CD4-positive, alpha-beta T cell (primary cell): ENCODE measurements at regions of chr9 and their contacts with region 1.

Region 1: GRCh38 chr9:31137176-31138160 is 1247.0 kb upstream of the ACO1 start:
- DNase-seq: no peak
- ATAC-seq: no peak
- H3K4me3 ChIP-seq: no peak overlapping the region
- H3K4me3 Mint-ChIP-seq: no peak overlapping the region
- H3K27ac ChIP-seq: no peak overlapping the region
- H3K27ac Mint-ChIP-seq: no peak overlapping the region
- H3K4me1 ChIP-seq: no peaks in the 10 kb centered on the region
- H3K4me1 Mint-ChIP-seq: peaks cover 6% of the 10 kb centered on the region
- H3K27me3 ChIP-seq: no peaks in the 10 kb centered on the region
- H3K27me3 Mint-ChIP-seq: no peaks in the 10 kb centered on the region
- CTCF ChIP-seq: no peak

Region 2: GRCh38 chr9:30982301-30982700 is 155.2 kb before region 1 on chr9:
- CTCF ChIA-PET with region 1: no interaction called
- POLR2A ChIA-PET with region 1: no interaction called
- intact Hi-C with region 1: no loop called
- DNase-seq: no peak
- ATAC-seq: no peak
- H3K4me3 ChIP-seq: no peak overlapping the region
- H3K4me3 Mint-ChIP-seq: no peak overlapping the region
- H3K27ac ChIP-seq: no peak overlapping the region
- H3K27ac Mint-ChIP-seq: no peak overlapping the region
- H3K4me1 ChIP-seq: no peaks in the 10 kb centered on the region
- H3K4me1 Mint-ChIP-seq: no peaks in the 10 kb centered on the region
- H3K27me3 ChIP-seq: no peaks in the 10 kb centered on the region
- H3K27me3 Mint-ChIP-seq: no peaks in the 10 kb centered on the region
- CTCF ChIP-seq: no peak

Region 3: DNA sequence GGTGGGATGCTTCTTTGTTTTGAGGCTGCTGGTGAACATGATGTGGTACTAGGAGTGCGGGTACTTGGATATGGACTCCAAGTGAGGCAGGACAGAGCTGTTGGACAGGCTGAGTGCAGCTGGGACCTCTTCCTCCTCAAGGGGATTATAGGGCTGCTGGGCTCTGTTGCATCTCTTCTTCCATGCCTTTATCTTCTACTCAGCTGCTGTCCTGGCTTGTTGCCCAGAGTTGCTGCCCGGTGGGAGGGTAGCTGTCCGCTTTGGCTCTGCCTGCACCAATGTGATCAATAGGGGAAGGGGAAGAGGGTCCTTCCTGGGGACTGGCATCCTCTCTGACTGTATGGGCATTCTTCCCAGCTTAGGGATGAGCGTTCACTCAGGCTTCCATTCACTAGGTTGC is 29.0 kb after region 1 on chr9:
- CTCF ChIA-PET with region 1: no interaction called
- POLR2A ChIA-PET with region 1: no interaction called
- intact Hi-C with region 1: no loop called
- DNase-seq: no peak
- ATAC-seq: no peak
- H3K4me3 ChIP-seq: no peak overlapping the region
- H3K4me3 Mint-ChIP-seq: no peak overlapping the region
- H3K27ac ChIP-seq: no peak overlapping the region
- H3K27ac Mint-ChIP-seq: no peak overlapping the region
- H3K4me1 ChIP-seq: no peaks in the 10 kb centered on the region
- H3K4me1 Mint-ChIP-seq: peaks cover 6% of the 10 kb centered on the region
- H3K27me3 ChIP-seq: no peaks in the 10 kb centered on the region
- H3K27me3 Mint-ChIP-seq: no peaks in the 10 kb centered on the region
- CTCF ChIP-seq: no peak

Region 4: DNA sequence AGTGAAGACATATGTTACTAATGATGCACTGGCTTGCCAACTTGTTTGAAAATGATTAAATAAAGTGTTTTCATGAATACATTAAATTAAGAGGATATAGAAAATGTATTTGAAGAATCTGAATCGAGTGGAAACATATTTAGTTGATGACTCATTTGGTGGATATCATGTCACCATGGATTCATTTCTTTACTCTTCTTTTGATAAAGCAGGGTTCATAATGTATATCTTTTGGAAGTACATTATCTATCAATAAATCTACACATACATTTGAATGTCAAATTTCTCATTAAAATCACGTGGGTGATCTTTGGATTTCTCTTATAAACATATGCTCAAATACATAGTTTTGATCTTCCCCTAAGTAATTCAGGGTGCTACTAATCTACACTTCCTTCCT is 98.9 kb after region 1 on chr9:
- CTCF ChIA-PET with region 1: no interaction called
- POLR2A ChIA-PET with region 1: no interaction called
- intact Hi-C with region 1: no loop called
- DNase-seq: no peak
- ATAC-seq: no peak
- H3K4me3 ChIP-seq: no peak overlapping the region
- H3K4me3 Mint-ChIP-seq: no peak overlapping the region
- H3K27ac ChIP-seq: no peak overlapping the region
- H3K27ac Mint-ChIP-seq: no peak overlapping the region
- H3K4me1 ChIP-seq: no peaks in the 10 kb centered on the region
- H3K4me1 Mint-ChIP-seq: peaks cover 22% of the 10 kb centered on the region
- H3K27me3 ChIP-seq: no peaks in the 10 kb centered on the region
- H3K27me3 Mint-ChIP-seq: no peaks in the 10 kb centered on the region
- CTCF ChIP-seq: no peak

Region 5: GRCh38 chr9:31574006-31574765 is 436.7 kb after region 1 on chr9:
- CTCF ChIA-PET with region 1: no interaction called
- POLR2A ChIA-PET with region 1: no interaction called
- intact Hi-C with region 1: loop called in 1 of 2 experiments (anchors 10 kb)
- DNase-seq: no peak
- ATAC-seq: no peak
- H3K4me3 ChIP-seq: no peak overlapping the region
- H3K4me3 Mint-ChIP-seq: no peak overlapping the region
- H3K27ac ChIP-seq: no peak overlapping the region
- H3K27ac Mint-ChIP-seq: no peak overlapping the region
- H3K4me1 ChIP-seq: no peaks in the 10 kb centered on the region
- H3K4me1 Mint-ChIP-seq: no peaks in the 10 kb centered on the region
- H3K27me3 ChIP-seq: no peaks in the 10 kb centered on the region
- H3K27me3 Mint-ChIP-seq: no peaks in the 10 kb centered on the region
- CTCF ChIP-seq: no peak